Naive thymus-derived CD4-positive, alpha-beta T cell (primary cell): ENCODE measurements at regions of chr4 and their contacts with region 1.

Region 1: GRCh38 chr4:119212234-119212963 is at the start of gene USP53:
- DNase-seq: peak; percentile 92 to 98 (median 96)
- ATAC-seq: peak; percentile 96
- H3K4me3 ChIP-seq: peak within 1 kb of the TSS; percentile 91
- H3K4me3 Mint-ChIP-seq: peak within 1 kb of the TSS; percentile 89 to 100 (median 94)
- H3K27ac ChIP-seq: peak within 1 kb of the TSS; percentile 77
- H3K27ac Mint-ChIP-seq: peak within 1 kb of the TSS; percentile 92 to 100 (median 96)
- H3K4me1 ChIP-seq: peaks cover 0 to 10% of the 10 kb centered on the region in 2 donors
- H3K4me1 Mint-ChIP-seq: peaks cover 27 to 65% (median 39%) of the 10 kb centered on the region in 7 donors
- H3K27me3 ChIP-seq: no peaks in the 10 kb centered on the region
- H3K27me3 Mint-ChIP-seq: peaks cover 0 to 4% (median 0%) of the 10 kb centered on the region in 5 donors
- total RNA-seq, gene USP53: 7.3 to 29.8 (median 21.2) TPM

Region 2: DNA sequence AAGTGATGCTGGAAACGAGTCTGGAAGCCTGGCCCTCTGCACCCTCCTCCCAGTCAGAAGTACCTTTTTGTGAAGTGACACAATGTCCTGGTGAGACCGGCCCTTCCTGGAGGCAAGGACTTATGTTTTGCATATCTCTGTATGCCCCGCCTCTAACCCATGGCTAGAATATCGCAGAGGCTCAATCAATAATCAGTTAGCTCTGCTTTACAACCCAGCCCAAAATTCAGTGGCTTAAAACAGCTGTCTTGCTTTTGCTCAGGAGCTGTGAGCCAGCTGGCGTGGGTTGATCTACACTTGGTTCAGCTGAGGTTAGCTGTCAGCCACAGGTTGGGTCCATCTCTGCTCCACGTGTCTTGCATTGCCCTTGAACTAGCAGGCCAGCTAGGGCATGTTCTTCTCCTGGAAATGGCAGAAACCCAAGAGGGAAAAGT is 626.0 kb before region 1 on chr4:
- CTCF ChIA-PET with region 1: no interaction called
- POLR2A ChIA-PET with region 1: no interaction called
- intact Hi-C with region 1: loop called in 1 of 2 experiments (anchors 10 kb)
- DNase-seq: no peak
- ATAC-seq: no peak
- H3K4me3 ChIP-seq: no peak overlapping the region
- H3K4me3 Mint-ChIP-seq: no peak overlapping the region
- H3K27ac ChIP-seq: no peak overlapping the region
- H3K27ac Mint-ChIP-seq: no peak overlapping the region
- H3K4me1 ChIP-seq: peaks cover 4 to 6% of the 10 kb centered on the region in 2 donors
- H3K4me1 Mint-ChIP-seq: peaks cover 6 to 19% (median 17%) of the 10 kb centered on the region in 7 donors
- H3K27me3 ChIP-seq: no peaks in the 10 kb centered on the region
- H3K27me3 Mint-ChIP-seq: peaks cover 2 to 37% (median 16%) of the 10 kb centered on the region in 5 donors

Region 3: DNA sequence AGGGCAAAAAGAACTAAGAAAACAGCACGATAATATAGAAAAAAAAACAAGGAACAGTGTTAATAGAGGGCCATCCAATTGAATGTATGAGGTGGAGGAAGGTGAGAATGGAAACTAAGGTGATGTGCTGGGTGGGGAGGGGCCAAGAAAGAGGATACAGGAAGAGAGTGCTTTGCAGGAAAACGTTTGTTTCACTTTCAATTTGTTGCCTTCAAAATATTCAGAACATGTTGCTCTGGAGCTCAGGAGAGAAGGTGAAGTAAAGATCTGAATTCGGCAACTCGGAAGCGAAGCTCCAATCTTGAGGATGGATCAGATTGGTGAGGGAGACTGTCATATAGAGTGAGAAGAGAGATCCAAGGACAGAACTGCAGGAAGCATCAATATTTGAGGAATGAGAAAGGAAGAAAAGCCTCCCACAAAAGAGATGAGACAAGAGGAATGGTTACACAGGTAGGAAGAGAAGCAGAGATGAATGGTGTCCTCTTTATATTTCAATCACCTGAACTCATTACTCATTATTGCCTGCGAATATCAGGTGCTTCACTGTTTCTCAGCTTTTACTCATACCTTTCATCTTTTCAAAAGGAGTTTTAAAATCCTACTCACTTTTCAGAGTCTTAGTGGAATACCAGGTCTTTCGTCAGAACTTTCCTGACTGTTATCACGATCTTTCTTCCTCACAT is 361.8 kb before region 1 on chr4:
- CTCF ChIA-PET with region 1: no interaction called
- POLR2A ChIA-PET with region 1: interaction called, 3 read pairs
- intact Hi-C with region 1: loop called in 1 of 2 experiments (anchors 5 kb)
- DNase-seq: peak in 7 of 9 donors; percentile 49 to 65 (median 59)
- ATAC-seq: peak; percentile 93
- H3K4me3 ChIP-seq: peak overlapping the region; percentile 78
- H3K4me3 Mint-ChIP-seq: peak overlapping the region; percentile 86 to 99 (median 93)
- H3K27ac ChIP-seq: peak overlapping the region; percentile 73
- H3K27ac Mint-ChIP-seq: peak overlapping the region; percentile 92 to 99 (median 96)
- H3K4me1 ChIP-seq: peaks cover 0 to 9% of the 10 kb centered on the region in 2 donors
- H3K4me1 Mint-ChIP-seq: peaks cover 14 to 37% (median 28%) of the 10 kb centered on the region in 7 donors
- H3K27me3 ChIP-seq: no peaks in the 10 kb centered on the region
- H3K27me3 Mint-ChIP-seq: peaks cover 0 to 20% (median 3%) of the 10 kb centered on the region in 5 donors

Region 4: GRCh38 chr4:119016636-119017035 is 195.8 kb before region 1 on chr4:
- CTCF ChIA-PET with region 1: no interaction called
- POLR2A ChIA-PET with region 1: no interaction called
- intact Hi-C with region 1: no loop called
- DNase-seq: no peak
- ATAC-seq: no peak
- H3K4me3 ChIP-seq: no peak overlapping the region
- H3K4me3 Mint-ChIP-seq: no peak overlapping the region
- H3K27ac ChIP-seq: no peak overlapping the region
- H3K27ac Mint-ChIP-seq: no peak overlapping the region
- H3K4me1 ChIP-seq: no peaks in the 10 kb centered on the region
- H3K4me1 Mint-ChIP-seq: no peaks in the 10 kb centered on the region
- H3K27me3 ChIP-seq: no peaks in the 10 kb centered on the region
- H3K27me3 Mint-ChIP-seq: peaks cover 4 to 30% (median 13%) of the 10 kb centered on the region in 5 donors

Region 5: DNA sequence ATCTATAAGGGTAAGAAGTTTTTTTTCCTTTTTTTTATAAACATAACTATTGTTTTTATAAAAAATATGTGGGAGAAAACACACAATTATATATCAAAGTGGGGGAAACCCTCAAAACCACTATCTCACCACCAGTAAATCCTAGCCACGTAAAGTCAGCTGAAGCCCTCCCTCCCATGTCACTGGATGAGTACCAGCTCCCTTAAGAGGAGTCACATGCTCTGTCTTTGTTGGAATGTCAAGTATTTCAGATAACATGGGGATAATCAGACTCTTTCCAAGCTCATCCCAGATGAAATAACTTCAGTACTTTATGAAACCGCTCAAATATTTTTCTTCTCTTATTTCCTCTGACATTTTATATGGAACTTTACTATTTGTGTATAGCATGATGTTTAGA is 74.4 kb before region 1 on chr4:
- CTCF ChIA-PET with region 1: no interaction called
- POLR2A ChIA-PET with region 1: interaction called, 13 read pairs
- intact Hi-C with region 1: loop called in 1 of 2 experiments (anchors 2 kb)
- DNase-seq: peak in 1 of 9 donors; percentile 7
- ATAC-seq: no peak
- H3K4me3 ChIP-seq: no peak overlapping the region
- H3K4me3 Mint-ChIP-seq: peak overlapping the region in 5 of 10 donors; percentile 21 to 73 (median 62)
- H3K27ac ChIP-seq: no peak overlapping the region
- H3K27ac Mint-ChIP-seq: peak overlapping the region in 4 of 9 donors; percentile 22 to 93 (median 64)
- H3K4me1 ChIP-seq: peaks cover 25 to 27% of the 10 kb centered on the region in 2 donors
- H3K4me1 Mint-ChIP-seq: peaks cover 11 to 60% (median 35%) of the 10 kb centered on the region in 7 donors
- H3K27me3 ChIP-seq: no peaks in the 10 kb centered on the region
- H3K27me3 Mint-ChIP-seq: peaks cover 0 to 1% (median 0%) of the 10 kb centered on the region in 5 donors

Region 6: GRCh38 chr4:119286377-119287002 is 74.1 kb after region 1 on chr4:
- CTCF ChIA-PET with region 1: no interaction called
- POLR2A ChIA-PET with region 1: interaction called, 3 read pairs
- intact Hi-C with region 1: loop called (anchors 1 kb)
- DNase-seq: peak in 7 of 9 donors; percentile 28 to 52 (median 42)
- ATAC-seq: peak; percentile 56
- H3K4me3 ChIP-seq: no peak overlapping the region
- H3K4me3 Mint-ChIP-seq: no peak overlapping the region
- H3K27ac ChIP-seq: no peak overlapping the region
- H3K27ac Mint-ChIP-seq: no peak overlapping the region
- H3K4me1 ChIP-seq: peaks cover 0 to 3% of the 10 kb centered on the region in 2 donors
- H3K4me1 Mint-ChIP-seq: peaks cover 13 to 34% (median 26%) of the 10 kb centered on the region in 7 donors
- H3K27me3 ChIP-seq: no peaks in the 10 kb centered on the region
- H3K27me3 Mint-ChIP-seq: no peaks in the 10 kb centered on the region

Region 7: GRCh38 chr4:119585771-119586170 is 373.4 kb after region 1 on chr4:
- CTCF ChIA-PET with region 1: no interaction called
- POLR2A ChIA-PET with region 1: no interaction called
- intact Hi-C with region 1: no loop called
- DNase-seq: no peak
- ATAC-seq: no peak
- H3K4me3 ChIP-seq: no peak overlapping the region
- H3K4me3 Mint-ChIP-seq: no peak overlapping the region
- H3K27ac ChIP-seq: no peak overlapping the region
- H3K27ac Mint-ChIP-seq: no peak overlapping the region
- H3K4me1 ChIP-seq: no peaks in the 10 kb centered on the region
- H3K4me1 Mint-ChIP-seq: no peaks in the 10 kb centered on the region
- H3K27me3 ChIP-seq: no peaks in the 10 kb centered on the region
- H3K27me3 Mint-ChIP-seq: peaks cover 0 to 6% (median 4%) of the 10 kb centered on the region in 5 donors

Region 8: GRCh38 chr4:120491481-120491880 is 1279.1 kb after region 1 on chr4:
- CTCF ChIA-PET with region 1: no interaction called
- POLR2A ChIA-PET with region 1: no interaction called
- intact Hi-C with region 1: no loop called
- DNase-seq: no peak
- ATAC-seq: no peak
- H3K4me3 ChIP-seq: no peak overlapping the region
- H3K4me3 Mint-ChIP-seq: no peak overlapping the region
- H3K27ac ChIP-seq: no peak overlapping the region
- H3K27ac Mint-ChIP-seq: no peak overlapping the region
- H3K4me1 ChIP-seq: no peaks in the 10 kb centered on the region
- H3K4me1 Mint-ChIP-seq: no peaks in the 10 kb centered on the region
- H3K27me3 ChIP-seq: no peaks in the 10 kb centered on the region
- H3K27me3 Mint-ChIP-seq: peaks cover 0 to 6% (median 0%) of the 10 kb centered on the region in 5 donors